ENCODE measurements at regions of chr2 and their contacts with region 1.

Region 1: GRCh38 chr2:16773080-16773713 is 107.6 kb upstream of the CYRIA start:
- DNase-seq: peak; percentile 34
- H3K4me3 ChIP-seq: no peak overlapping the region
- H3K27ac ChIP-seq: no peak overlapping the region
- H3K4me1 ChIP-seq: no peaks in the 10 kb centered on the region
- H3K27me3 ChIP-seq: no peaks in the 10 kb centered on the region
- CTCF ChIP-seq: peak; percentile 31 to 38
- POLR2A ChIP-seq: no peak

Region 2: GRCh38 chr2:16900405-16901025 is 127.3 kb after region 1 on chr2:
- CTCF ChIA-PET with region 1: no interaction called
- POLR2A ChIA-PET with region 1: no interaction called
- dilution Hi-C with region 1: no loop called
- intact Hi-C with region 1: loop called (anchors 1 kb)
- DNase-seq: no peak
- H3K4me3 ChIP-seq: no peak overlapping the region
- H3K27ac ChIP-seq: no peak overlapping the region
- H3K4me1 ChIP-seq: no peaks in the 10 kb centered on the region
- H3K27me3 ChIP-seq: no peaks in the 10 kb centered on the region
- CTCF ChIP-seq: peak; percentile 13 to 26
- POLR2A ChIP-seq: no peak

Region 3: GRCh38 chr2:17148407-17149145 is 375.4 kb after region 1 on chr2:
- CTCF ChIA-PET with region 1: no interaction called
- POLR2A ChIA-PET with region 1: no interaction called
- dilution Hi-C with region 1: no loop called
- intact Hi-C with region 1: loop called (anchors 2 kb)
- DNase-seq: no peak
- H3K4me3 ChIP-seq: no peak overlapping the region
- H3K27ac ChIP-seq: no peak overlapping the region
- H3K4me1 ChIP-seq: no peaks in the 10 kb centered on the region
- H3K27me3 ChIP-seq: no peaks in the 10 kb centered on the region
- CTCF ChIP-seq: no peak
- POLR2A ChIP-seq: no peak

Region 4: DNA sequence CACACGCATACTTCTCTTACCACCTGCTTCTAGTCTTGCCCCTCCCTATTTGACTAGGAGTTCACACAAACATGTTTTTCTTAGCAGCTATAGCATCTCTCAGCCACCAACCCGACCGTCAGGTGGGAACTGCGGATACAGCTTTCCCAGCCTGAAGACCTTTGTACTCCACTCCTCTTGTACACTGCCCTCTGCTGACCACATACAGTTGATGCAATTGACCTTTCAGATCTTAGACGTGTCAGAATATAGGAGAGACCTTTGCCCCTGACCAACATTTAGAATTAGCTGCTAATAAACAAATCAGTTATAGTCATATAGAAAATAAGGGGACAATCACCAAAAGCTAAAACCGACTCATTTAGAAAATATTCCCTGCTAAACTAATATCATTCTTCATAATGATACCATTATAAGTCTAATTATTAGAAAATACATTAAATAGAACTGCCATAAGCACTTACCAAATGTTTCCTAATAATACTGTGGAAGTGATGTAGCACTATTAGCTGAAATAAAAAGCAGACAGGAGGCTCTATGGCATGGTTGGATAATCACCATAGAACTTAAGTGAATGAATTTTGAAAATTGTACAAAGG is 536.6 kb after region 1 on chr2:
- CTCF ChIA-PET with region 1: interaction called, 11 read pairs
- POLR2A ChIA-PET with region 1: no interaction called
- dilution Hi-C with region 1: no loop called
- intact Hi-C with region 1: no loop called
- DNase-seq: peak; percentile 24
- H3K4me3 ChIP-seq: no peak overlapping the region
- H3K27ac ChIP-seq: no peak overlapping the region
- H3K4me1 ChIP-seq: no peaks in the 10 kb centered on the region
- H3K27me3 ChIP-seq: no peaks in the 10 kb centered on the region
- CTCF ChIP-seq: peak; percentile 44 to 57
- POLR2A ChIP-seq: no peak

Measured in endothelial cell of umbilical vein (primary cell).